Common myeloid progenitor, CD34-positive (primary cell): ENCODE measurements at regions of chr9 and their contacts with region 1.

Region 1: DNA sequence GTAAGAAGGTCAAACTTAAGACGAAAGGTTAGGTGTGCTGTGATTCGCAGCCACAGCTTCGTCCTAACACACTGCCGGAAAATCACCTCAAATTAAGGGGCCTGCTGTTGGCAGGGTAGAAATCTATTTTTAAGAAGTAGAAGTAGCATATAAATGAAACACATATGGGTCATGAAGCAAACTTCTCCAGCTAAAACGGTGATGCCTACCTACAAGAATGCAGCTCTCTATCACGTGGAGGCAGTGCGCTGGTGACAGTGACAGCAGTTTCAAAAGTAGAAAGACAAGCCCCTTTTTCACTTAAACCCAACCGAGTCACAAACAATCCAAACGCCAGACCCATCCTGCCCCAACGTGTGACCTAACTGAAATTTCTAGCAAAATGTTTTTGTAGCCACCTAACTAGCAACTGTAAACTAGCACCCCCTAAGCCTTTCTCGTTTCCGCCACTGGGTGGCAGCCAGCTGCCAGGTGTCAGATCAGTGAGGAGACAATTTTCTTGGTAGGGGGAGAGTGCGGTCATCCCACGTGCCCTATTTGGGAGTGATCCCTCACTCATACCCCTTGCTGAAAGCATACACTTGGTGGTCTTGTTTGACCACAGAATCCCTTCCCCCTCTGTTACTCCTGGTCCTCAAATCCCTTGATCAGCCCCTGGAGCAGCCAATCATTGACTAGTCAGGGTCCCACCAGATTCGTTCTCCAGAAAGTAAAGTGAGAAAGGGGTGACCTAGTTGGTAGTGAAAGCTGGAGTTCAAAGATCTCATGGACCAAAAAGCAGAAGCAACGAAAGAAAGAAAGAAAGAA is 71.8 kb upstream of the MAMDC2 start:
- DNase-seq: peak; percentile 57 to 83 (median 75)
- H3K4me3 ChIP-seq: no peak overlapping the region
- H3K27ac ChIP-seq: no peak overlapping the region
- H3K4me1 ChIP-seq: peaks cover 0 to 12% (median 0%) of the 10 kb centered on the region in 4 experiments
- H3K27me3 ChIP-seq: peaks cover 0 to 2% (median 0%) of the 10 kb centered on the region in 5 experiments

Region 2: DNA sequence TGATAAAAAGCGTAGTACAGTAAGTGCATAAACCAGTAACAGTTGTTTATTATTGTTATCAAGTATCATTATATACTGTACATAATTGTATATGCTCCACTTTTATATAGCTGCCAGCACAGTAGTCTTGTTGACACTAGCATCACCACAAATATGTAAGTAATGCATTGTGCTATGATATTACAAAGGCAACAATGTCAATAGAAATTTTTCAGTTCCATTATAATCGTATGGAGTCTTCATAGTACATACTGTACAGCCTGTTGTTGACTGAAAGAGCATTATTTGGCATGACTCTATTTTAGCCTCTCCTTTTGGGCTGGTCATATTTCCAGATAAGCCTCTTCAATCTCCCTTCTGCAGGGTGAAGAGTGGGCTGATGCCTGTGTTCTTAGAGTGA is 110.8 kb before region 1 on chr9:
- CTCF ChIA-PET with region 1: no interaction called
- POLR2A ChIA-PET with region 1: no interaction called
- DNase-seq: no peak
- H3K4me3 ChIP-seq: no peak overlapping the region
- H3K27ac ChIP-seq: no peak overlapping the region
- H3K4me1 ChIP-seq: no peaks in the 10 kb centered on the region
- H3K27me3 ChIP-seq: no peaks in the 10 kb centered on the region

Region 3: DNA sequence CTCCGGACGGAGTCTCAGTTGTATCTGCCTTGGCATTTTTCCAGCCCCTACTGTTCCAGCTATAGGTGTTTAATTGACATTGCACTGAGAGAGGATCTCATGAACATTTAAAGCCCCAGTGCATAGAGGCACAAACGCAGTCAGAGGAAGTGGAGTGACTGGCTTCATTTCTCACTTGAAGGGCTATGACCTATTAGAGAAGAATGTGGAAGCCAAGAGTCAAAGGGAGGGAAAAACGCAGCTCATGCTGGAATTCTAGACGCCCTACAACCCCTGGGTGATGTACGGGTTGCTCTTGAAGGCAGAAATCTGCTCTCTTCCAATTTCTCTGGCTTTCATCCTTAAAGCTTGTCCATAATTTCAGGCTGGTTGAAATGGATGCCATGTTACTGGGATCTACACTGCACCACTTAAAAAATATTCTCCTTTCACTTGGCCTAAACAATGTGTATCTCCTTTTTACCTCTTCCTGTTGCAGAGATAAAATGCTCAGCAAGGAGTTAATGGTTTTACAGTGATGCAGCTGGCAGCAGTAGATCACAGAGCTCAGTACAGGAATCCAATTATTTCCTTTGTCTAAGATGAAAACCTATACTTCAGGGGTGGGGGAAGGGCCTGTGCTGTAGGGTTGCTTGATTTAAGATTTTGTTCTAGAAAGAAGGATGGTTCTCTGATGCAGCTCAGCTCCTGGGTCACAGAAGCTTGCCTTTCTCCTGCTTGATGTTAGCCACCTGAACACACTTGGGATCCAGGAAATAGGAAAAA is 10.0 kb after region 1 on chr9:
- CTCF ChIA-PET with region 1: interaction called, 10 read pairs
- POLR2A ChIA-PET with region 1: no interaction called
- DNase-seq: no peak
- H3K4me3 ChIP-seq: no peak overlapping the region
- H3K27ac ChIP-seq: no peak overlapping the region
- H3K4me1 ChIP-seq: no peaks in the 10 kb centered on the region
- H3K27me3 ChIP-seq: peaks cover 0 to 2% (median 0%) of the 10 kb centered on the region in 5 experiments

Region 4: DNA sequence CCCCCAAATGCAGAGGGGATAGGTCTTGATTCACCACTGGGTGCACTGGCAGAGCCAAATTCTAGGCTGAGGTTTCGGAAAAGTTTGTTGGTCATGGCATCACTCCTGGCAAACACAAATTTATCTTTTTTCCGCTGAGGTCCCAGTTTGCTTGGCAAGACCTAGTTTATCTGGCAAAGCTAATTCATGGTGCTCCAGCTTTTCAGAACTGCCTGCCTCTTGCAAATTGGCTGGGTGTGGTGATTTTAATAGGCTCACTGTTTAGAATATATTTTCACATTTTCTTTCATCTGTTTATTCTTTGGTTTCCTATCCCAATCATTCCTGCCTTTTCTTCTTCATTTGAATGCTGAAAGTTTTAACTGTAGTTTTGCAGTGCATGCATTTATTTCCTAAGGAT is 21.3 kb after region 1 on chr9:
- CTCF ChIA-PET with region 1: no interaction called
- POLR2A ChIA-PET with region 1: no interaction called
- DNase-seq: no peak
- H3K4me3 ChIP-seq: no peak overlapping the region
- H3K27ac ChIP-seq: no peak overlapping the region
- H3K4me1 ChIP-seq: no peaks in the 10 kb centered on the region
- H3K27me3 ChIP-seq: peaks cover 0 to 3% (median 0%) of the 10 kb centered on the region in 5 experiments